B cell (primary cell): ENCODE measurements at regions of chr7 and their contacts with region 1.

Region 1: GRCh38 chr7:95916573-95917297 is 144.4 kb downstream of the DYNC1I1 start:
- DNase-seq: peak; percentile 71
- ATAC-seq: peak; percentile 31
- H3K4me3 ChIP-seq: no peak overlapping the region
- H3K4me3 Mint-ChIP-seq: no peak overlapping the region
- H3K27ac ChIP-seq: no peak overlapping the region
- H3K27ac Mint-ChIP-seq: no peak overlapping the region
- H3K4me1 ChIP-seq: no peaks in the 10 kb centered on the region
- H3K4me1 Mint-ChIP-seq: peaks cover 3% of the 10 kb centered on the region
- H3K27me3 ChIP-seq: peaks cover 0 to 3% (median 0%) of the 10 kb centered on the region in 4 experiments
- H3K27me3 Mint-ChIP-seq: peaks cover 13% of the 10 kb centered on the region
- CTCF ChIP-seq: peak; percentile 98

Region 2: GRCh38 chr7:95276114-95276513 is 640.6 kb before region 1 on chr7:
- CTCF ChIA-PET with region 1: no interaction called
- POLR2A ChIA-PET with region 1: no interaction called
- intact Hi-C with region 1: no loop called
- DNase-seq: no peak
- ATAC-seq: no peak
- H3K4me3 ChIP-seq: no peak overlapping the region
- H3K4me3 Mint-ChIP-seq: no peak overlapping the region
- H3K27ac ChIP-seq: no peak overlapping the region
- H3K27ac Mint-ChIP-seq: no peak overlapping the region
- H3K4me1 ChIP-seq: no peaks in the 10 kb centered on the region
- H3K4me1 Mint-ChIP-seq: no peaks in the 10 kb centered on the region
- H3K27me3 ChIP-seq: no peaks in the 10 kb centered on the region
- H3K27me3 Mint-ChIP-seq: peaks cover 4% of the 10 kb centered on the region
- CTCF ChIP-seq: no peak

Region 3: DNA sequence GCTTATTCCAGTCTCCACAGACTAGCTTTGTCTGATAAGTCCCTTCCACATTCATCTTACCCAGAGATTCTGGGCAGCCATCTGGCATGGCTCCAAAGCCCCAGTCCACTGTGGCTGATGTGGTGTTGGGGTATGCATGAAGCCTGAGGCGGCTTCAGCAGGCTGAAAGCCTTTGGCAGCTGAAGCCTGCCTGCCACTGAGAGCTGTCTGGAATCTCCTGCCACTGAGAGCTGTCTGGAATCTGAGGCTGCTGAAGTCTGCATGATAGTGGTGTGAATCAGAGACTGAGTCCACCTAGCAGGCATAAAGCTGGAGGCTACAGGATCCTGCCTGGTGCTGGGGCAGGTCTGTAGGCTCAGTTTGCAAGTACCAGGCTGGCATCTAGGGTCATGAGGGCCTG is 57.3 kb before region 1 on chr7:
- CTCF ChIA-PET with region 1: no interaction called
- POLR2A ChIA-PET with region 1: no interaction called
- intact Hi-C with region 1: no loop called
- DNase-seq: no peak
- ATAC-seq: no peak
- H3K4me3 ChIP-seq: no peak overlapping the region
- H3K4me3 Mint-ChIP-seq: no peak overlapping the region
- H3K27ac ChIP-seq: no peak overlapping the region
- H3K27ac Mint-ChIP-seq: no peak overlapping the region
- H3K4me1 ChIP-seq: no peaks in the 10 kb centered on the region
- H3K4me1 Mint-ChIP-seq: no peaks in the 10 kb centered on the region
- H3K27me3 ChIP-seq: peaks cover 0 to 4% (median 1%) of the 10 kb centered on the region in 4 experiments
- H3K27me3 Mint-ChIP-seq: no peaks in the 10 kb centered on the region
- CTCF ChIP-seq: no peak

Region 4: GRCh38 chr7:95905165-95905564 is 11.6 kb before region 1 on chr7:
- CTCF ChIA-PET with region 1: interaction called, 11 read pairs
- POLR2A ChIA-PET with region 1: no interaction called
- intact Hi-C with region 1: no loop called
- DNase-seq: no peak
- ATAC-seq: no peak
- H3K4me3 ChIP-seq: no peak overlapping the region
- H3K4me3 Mint-ChIP-seq: no peak overlapping the region
- H3K27ac ChIP-seq: no peak overlapping the region
- H3K27ac Mint-ChIP-seq: no peak overlapping the region
- H3K4me1 ChIP-seq: no peaks in the 10 kb centered on the region
- H3K4me1 Mint-ChIP-seq: no peaks in the 10 kb centered on the region
- H3K27me3 ChIP-seq: no peaks in the 10 kb centered on the region
- H3K27me3 Mint-ChIP-seq: peaks cover 11% of the 10 kb centered on the region
- CTCF ChIP-seq: no peak

Region 5: GRCh38 chr7:96075510-96076349 is 159.0 kb after region 1 on chr7:
- CTCF ChIA-PET with region 1: no interaction called
- POLR2A ChIA-PET with region 1: no interaction called
- intact Hi-C with region 1: loop called (anchors 2 kb)
- DNase-seq: peak; percentile 65
- ATAC-seq: peak; percentile 79
- H3K4me3 ChIP-seq: peak overlapping the region in 4 of 5 experiments; percentile 18 to 56 (median 47)
- H3K4me3 Mint-ChIP-seq: peak overlapping the region; percentile 92
- H3K27ac ChIP-seq: no peak overlapping the region
- H3K27ac Mint-ChIP-seq: no peak overlapping the region
- H3K4me1 ChIP-seq: peaks cover 9% of the 10 kb centered on the region in 2 donors
- H3K4me1 Mint-ChIP-seq: peaks cover 6% of the 10 kb centered on the region
- H3K27me3 ChIP-seq: peaks cover 0 to 32% (median 23%) of the 10 kb centered on the region in 4 experiments
- H3K27me3 Mint-ChIP-seq: peaks cover 40% of the 10 kb centered on the region
- CTCF ChIP-seq: peak; percentile 81

Region 6: GRCh38 chr7:97027427-97028234 is 1110.9 kb after region 1 on chr7:
- CTCF ChIA-PET with region 1: interaction called, 50 read pairs
- POLR2A ChIA-PET with region 1: no interaction called
- intact Hi-C with region 1: loop called (anchors 1 kb)
- DNase-seq: peak; percentile 76
- ATAC-seq: peak; percentile 71
- H3K4me3 ChIP-seq: peak overlapping the region in 3 of 5 experiments; percentile 30 to 52 (median 32)
- H3K4me3 Mint-ChIP-seq: peak overlapping the region; percentile 86
- H3K27ac ChIP-seq: no peak overlapping the region
- H3K27ac Mint-ChIP-seq: no peak overlapping the region
- H3K4me1 ChIP-seq: peaks cover 18 to 28% of the 10 kb centered on the region in 2 donors
- H3K4me1 Mint-ChIP-seq: peaks cover 24% of the 10 kb centered on the region
- H3K27me3 ChIP-seq: peaks cover 0 to 58% (median 39%) of the 10 kb centered on the region in 4 experiments
- H3K27me3 Mint-ChIP-seq: peaks cover 77% of the 10 kb centered on the region
- CTCF ChIP-seq: peak; percentile 80

Region 7: DNA sequence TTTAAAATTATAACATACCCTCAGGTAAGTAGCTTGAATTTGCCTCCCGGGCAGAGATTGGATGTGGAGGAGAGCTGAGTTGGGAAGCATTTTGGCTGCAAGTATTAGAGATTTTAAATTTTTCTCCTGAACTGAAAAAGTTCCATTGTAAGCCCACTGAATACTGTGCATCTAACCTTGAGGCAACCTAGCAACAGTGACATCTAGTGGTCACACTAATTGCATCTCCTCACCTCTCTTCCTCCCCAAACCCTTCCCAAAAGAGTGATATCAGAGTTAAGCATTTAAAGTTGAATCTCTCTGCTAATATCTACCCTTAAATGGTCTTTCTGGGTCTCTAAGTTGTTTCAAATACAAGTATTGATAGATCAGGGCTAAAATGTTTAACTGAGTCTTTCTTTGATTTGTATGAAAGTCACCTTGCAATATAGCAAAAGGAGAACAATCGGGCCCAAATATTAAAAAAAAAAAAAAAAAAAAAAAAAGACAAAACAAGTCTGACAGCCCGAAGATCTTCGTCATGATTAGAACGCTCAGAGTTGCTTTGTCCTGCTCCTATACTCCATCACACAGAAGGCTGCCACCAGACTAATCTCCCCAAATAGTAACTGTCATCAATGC is 1148.3 kb after region 1 on chr7:
- CTCF ChIA-PET with region 1: interaction called, 48 read pairs
- POLR2A ChIA-PET with region 1: no interaction called
- intact Hi-C with region 1: loop called (anchors 1 kb)
- DNase-seq: peak; percentile 56
- ATAC-seq: peak; percentile 57
- H3K4me3 ChIP-seq: no peak overlapping the region
- H3K4me3 Mint-ChIP-seq: no peak overlapping the region
- H3K27ac ChIP-seq: no peak overlapping the region
- H3K27ac Mint-ChIP-seq: no peak overlapping the region
- H3K4me1 ChIP-seq: no peaks in the 10 kb centered on the region
- H3K4me1 Mint-ChIP-seq: no peaks in the 10 kb centered on the region
- H3K27me3 ChIP-seq: no peaks in the 10 kb centered on the region
- H3K27me3 Mint-ChIP-seq: peaks cover 13% of the 10 kb centered on the region
- CTCF ChIP-seq: peak; percentile 82

Region 8: GRCh38 chr7:97179454-97180104 is 1262.8 kb after region 1 on chr7:
- CTCF ChIA-PET with region 1: interaction called, 3 read pairs
- POLR2A ChIA-PET with region 1: no interaction called
- intact Hi-C with region 1: loop called (anchors 2 kb)
- DNase-seq: peak; percentile 66
- ATAC-seq: peak; percentile 51
- H3K4me3 ChIP-seq: no peak overlapping the region
- H3K4me3 Mint-ChIP-seq: no peak overlapping the region
- H3K27ac ChIP-seq: no peak overlapping the region
- H3K27ac Mint-ChIP-seq: no peak overlapping the region
- H3K4me1 ChIP-seq: no peaks in the 10 kb centered on the region
- H3K4me1 Mint-ChIP-seq: peaks cover 4% of the 10 kb centered on the region
- H3K27me3 ChIP-seq: no peaks in the 10 kb centered on the region
- H3K27me3 Mint-ChIP-seq: no peaks in the 10 kb centered on the region
- CTCF ChIP-seq: peak; percentile 86

Region 9: DNA sequence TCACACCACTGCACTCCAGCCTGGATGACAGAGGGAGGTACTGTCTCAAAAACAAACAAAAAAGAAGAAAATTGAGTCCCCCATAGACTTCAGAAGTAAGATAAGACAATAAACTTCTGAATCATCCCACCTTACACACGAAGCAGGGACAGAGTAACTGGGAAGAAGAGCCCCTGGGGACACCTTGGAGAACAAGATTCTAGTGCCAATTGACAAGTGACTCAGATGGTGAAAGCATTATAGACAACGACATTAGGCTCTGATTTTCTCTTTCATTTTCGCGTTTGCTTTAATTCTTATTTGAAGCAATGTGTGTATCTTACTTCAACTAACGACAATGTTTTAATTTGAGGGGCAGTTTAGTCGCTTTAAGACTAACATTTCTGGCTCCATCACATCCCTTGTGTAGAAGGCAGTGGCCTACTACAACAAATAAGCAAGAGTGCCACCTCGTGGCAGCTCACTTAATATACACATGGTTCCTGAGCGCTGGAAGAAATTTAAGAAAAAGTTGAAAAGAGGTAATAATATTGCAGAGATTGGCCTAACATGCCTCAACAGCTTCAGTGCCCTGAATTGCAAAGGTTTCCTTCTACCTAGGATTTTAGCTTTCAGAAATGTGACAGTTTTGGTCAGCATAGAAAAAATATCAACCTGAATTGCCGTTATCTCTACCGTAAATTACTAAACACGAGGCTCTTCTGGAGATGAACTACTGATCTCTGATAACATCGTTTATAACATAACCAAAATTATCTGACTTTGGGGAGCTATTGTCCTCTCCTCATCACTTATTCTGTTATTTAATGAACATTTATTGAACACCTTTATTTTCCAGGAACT is 1918.8 kb after region 1 on chr7:
- CTCF ChIA-PET with region 1: interaction called, 14 read pairs
- POLR2A ChIA-PET with region 1: no interaction called
- intact Hi-C with region 1: no loop called
- DNase-seq: peak; percentile 68
- ATAC-seq: peak; percentile 51
- H3K4me3 ChIP-seq: no peak overlapping the region
- H3K4me3 Mint-ChIP-seq: no peak overlapping the region
- H3K27ac ChIP-seq: no peak overlapping the region
- H3K27ac Mint-ChIP-seq: no peak overlapping the region
- H3K4me1 ChIP-seq: no peaks in the 10 kb centered on the region
- H3K4me1 Mint-ChIP-seq: no peaks in the 10 kb centered on the region
- H3K27me3 ChIP-seq: peaks cover 0 to 4% (median 3%) of the 10 kb centered on the region in 4 experiments
- H3K27me3 Mint-ChIP-seq: peaks cover 47% of the 10 kb centered on the region
- CTCF ChIP-seq: peak; percentile 92